Head of caudate nucleus (tissue), 42 donors: ENCODE measurements at regions of chr17 and their contacts with region 1.

Region 1: DNA sequence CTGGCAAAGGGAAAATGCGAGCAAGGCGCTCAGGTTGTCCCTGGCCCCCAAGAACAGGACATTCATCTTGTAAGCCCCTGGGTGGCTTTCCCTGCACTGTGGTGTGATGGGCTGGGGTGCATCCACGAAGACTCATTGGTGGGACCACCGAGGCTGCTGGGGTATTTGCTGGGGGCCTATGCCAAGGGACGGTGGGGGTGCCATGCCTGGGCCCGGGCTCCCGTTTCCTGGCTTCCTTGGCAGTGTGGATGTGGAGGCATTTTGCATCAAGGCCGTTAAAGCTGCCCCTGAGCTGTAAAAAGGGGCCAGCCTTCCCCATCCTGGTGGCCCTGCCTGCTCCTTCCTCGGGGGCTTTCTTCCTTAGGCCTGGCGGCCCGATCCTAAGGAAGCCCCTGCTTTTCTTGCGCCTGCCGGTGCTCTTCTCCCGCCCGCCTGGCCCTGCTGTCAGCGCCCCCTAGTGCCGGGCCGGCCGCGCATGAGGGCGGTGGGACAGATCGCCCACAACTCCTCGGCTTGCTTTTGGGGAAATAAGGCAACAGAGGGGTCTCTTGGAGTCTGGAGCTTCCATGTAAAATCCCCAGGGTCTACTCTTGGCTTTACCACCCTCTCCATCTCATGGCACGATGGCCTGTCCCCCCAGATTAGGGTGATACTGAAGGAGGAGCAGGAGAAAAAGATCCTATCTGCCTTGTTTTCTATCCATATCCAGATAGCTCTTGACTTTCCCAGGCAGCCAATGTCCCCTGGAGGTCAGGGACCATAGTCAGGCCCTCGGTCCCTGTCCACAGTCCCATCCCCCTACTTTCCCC is 9.8 kb upstream of the TBX2 start:
- DNase-seq: peak in 29 of 42 donors; percentile 22 to 74 (median 47)

Region 2: GRCh38 chr17:60743799-60744198 is 646.1 kb before region 1 on chr17:
- intact Hi-C with region 1: loop called (anchors 10 kb)
- DNase-seq: peak in 22 of 42 donors; percentile 2 to 72 (median 35)

Region 3: DNA sequence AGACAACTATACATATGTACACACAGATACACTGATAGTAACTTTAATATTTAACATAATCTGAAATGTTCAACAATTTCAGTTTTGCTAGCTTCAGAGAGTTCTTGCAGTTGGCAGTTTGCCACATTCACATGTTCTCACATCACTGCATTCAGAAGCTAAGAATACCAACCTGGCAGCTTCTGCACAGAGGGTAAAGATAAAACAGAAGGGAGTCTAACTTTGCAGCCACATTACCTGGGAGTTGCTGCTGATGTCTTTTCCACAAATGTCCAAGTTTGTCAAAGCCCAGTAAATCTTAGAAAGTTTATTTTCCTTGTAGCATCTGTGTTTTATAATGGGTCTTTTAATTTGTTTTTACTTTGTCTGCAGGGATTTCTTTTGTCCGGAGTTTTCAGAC is 380.2 kb before region 1 on chr17:
- intact Hi-C with region 1: loop called (anchors 10 kb)
- DNase-seq: peak in 1 of 42 donors; percentile 22

Region 4: GRCh38 chr17:61179380-61179806 is 210.5 kb before region 1 on chr17:
- intact Hi-C with region 1: no loop called
- DNase-seq: peak in 3 of 42 donors; percentile 16 to 20 (median 18)

Region 5: GRCh38 chr17:61325382-61326073 is 64.3 kb before region 1 on chr17:
- intact Hi-C with region 1: no loop called
- DNase-seq: no peak

Region 6: DNA sequence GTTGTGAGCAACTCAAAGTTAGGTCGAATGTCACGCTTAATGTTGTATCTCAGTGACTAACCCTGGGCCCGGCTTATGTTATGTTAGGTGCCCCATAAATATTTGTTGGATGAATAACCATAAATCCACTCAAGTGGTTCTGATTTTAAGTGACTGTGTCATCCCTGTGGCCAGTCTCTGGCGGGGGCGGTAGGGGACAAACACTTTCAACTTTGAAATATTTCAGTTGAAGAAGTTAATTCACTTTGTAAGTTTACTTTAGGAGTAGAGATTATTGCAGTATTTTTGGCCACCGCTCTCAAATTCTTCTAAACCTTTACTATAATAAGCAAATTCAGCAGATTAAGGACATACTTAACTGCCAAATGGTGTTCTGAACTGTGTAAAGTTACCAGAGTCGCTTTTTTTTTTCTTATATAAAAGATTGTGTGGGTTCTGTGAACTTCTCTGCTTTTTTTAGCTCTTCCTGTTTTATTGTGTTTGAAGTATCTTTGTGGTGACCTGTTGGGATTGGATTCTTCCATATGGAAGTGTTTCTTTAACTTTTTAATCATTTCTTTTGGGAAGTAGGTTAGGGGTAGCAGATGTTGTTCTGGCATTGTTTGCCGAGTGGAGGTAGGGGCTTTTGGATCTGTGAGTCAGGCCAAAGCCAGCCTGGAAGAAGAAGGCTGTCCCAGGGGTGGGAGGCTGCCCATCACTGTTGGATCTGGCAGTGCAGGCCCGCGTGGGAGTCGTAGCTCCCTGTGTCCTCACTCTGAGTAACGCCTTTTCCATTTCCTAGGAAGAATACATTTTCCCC is 51.7 kb before region 1 on chr17:
- intact Hi-C with region 1: no loop called
- DNase-seq: no peak